ENCODE measurements at regions of chr16 and their contacts with region 1.

Region 1: DNA sequence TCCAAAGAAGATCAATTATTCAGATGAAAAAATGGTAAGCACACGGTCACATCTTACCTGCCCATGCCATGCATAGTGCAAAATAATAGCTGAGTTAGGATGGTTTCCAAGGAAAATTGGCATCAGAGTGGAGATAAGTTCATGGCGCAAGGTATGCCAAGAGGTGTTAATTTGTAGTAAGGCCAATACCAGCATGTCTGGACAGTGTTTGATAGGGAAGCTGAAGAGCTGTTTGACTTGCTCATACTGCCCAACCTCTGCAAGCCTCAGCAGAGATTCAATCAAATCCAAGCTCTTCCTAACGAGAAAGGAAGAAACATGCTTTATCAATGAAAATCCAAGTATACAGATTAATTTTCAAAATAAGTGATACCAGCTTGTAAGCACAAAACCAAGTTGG is 51.0 kb downstream of the CNOT1 start:
- DNase-seq: no peak
- CTCF ChIP-seq: no peak

Region 2: DNA sequence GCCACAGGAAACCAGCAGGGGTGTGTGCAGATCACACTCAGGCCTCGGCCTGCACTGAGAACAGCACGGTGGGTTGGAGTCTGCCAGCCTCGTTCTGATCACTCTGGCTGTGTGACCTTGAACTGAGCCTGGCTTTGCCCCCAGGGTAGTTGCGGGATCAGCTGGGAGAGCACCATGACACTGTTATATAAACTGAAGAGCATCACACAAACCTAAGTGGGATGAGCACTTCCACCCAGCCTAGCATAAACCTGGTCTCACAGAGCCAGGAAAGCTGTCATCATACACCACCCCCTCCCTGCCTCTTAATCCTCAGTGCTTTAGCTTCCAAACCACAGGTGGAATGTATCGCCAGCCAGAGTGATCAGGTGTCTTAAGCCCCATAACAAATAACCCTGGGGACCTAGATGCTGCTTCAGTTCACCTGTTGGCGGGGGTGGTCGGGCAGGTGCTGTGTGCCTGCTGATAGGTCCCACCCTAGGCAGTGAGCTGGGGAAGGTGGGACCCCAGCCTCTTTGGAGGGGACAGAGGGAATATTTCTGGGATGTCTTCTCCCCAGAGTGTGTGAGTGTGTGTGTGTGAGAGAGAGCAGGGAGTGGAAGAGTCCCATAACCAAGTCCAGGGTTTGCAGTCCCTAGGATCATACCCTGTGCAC is 107.2 kb before region 1 on chr16:
- CTCF ChIA-PET with region 1: no interaction called
- POLR2A ChIA-PET with region 1: no interaction called
- DNase-seq: no peak
- CTCF ChIP-seq: no peak

Region 3: GRCh38 chr16:58551496-58551895 is 27.1 kb before region 1 on chr16:
- CTCF ChIA-PET with region 1: no interaction called
- POLR2A ChIA-PET with region 1: no interaction called
- DNase-seq: no peak
- CTCF ChIP-seq: no peak

Region 4: DNA sequence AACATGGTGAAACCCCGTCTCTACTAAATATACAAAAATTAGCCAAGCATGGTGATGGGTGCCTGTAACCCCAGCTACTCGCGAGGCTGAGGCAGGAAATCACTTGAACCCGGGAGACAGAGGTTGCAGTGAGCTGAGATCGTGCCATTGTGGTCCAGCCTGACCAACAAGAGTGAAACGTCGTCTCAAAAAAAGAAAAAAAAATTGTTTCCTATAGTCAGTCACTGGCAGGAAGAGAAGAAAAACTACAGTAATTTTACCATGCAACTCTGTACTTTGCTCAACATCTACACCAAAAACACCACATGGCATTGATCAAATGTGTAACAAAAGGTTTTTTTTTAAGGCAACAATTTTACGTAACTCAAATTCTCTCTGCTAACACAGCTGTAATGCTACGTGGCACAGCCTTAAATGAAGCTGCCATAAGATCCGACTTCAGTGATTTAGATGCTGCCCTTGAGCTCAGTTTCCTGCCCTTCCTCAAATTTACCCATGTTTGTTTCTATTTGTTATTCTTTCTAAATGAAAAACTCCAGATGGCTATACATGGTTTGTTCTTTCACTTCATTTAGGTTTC is 10.8 kb after region 1 on chr16:
- CTCF ChIA-PET with region 1: interaction called, 14 read pairs
- POLR2A ChIA-PET with region 1: no interaction called
- DNase-seq: no peak
- CTCF ChIP-seq: no peak

Measured in GM10248 (cell line).